Naive thymus-derived CD8-positive, alpha-beta T cell (primary cell): ENCODE measurements at regions of chr17 and their contacts with region 1.

Region 1: DNA sequence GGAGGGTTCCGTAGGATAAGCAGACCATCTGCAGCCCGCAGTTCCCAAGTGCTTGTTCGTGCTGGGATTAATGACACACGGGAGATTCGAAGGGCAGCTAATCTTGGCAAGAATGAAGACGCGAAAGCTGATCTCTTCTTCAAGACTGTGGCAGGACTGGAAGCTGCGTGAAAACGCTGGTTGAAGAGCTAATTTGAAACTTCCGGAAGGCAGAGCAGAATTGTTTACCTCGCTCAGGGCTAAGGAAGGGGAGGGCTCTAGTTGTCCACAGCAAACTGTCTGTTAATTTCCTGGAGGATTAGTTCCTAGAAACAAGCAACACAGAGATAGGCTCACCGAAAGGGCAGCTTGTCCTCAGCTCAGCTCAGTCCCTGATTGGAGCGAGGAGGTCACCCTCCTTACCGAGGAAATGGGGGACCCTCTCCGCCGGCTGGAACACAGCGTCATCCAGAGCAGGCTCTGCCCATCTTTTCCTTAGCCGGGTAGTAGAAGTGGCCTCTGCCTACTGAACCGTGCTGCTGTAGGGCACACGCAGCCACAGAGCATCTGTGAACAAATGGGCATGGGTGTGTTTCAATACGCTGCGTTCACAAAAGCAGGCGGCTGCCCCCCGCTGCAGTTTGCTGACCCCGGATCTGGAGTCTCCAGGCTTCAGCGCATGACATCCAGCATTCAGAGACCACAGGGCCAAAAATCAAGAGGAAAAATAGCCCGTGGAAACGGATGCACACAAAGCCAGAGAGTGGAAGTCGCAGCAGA is 16.7 kb upstream of the BAIAP2 start:
- DNase-seq: peak in 5 of 10 donors; percentile 37 to 64 (median 51)
- ATAC-seq: peak; percentile 86 to 90
- H3K4me3 Mint-ChIP-seq: peak overlapping the region; percentile 82 to 95 (median 88)
- H3K27ac Mint-ChIP-seq: peak overlapping the region; percentile 95 to 99 (median 97)
- H3K4me1 Mint-ChIP-seq: peaks cover 16 to 41% (median 33%) of the 10 kb centered on the region in 4 donors
- H3K27me3 Mint-ChIP-seq: no peaks in the 10 kb centered on the region

Region 2: GRCh38 chr17:80991645-80992076 is 26.6 kb before region 1 on chr17 and contains the start of gene CHMP6:
- POLR2A ChIA-PET with region 1: interaction called, 29 read pairs
- DNase-seq: peak; percentile 44 to 87 (median 72)
- ATAC-seq: peak; percentile 67 to 73
- H3K4me3 Mint-ChIP-seq: peak within 1 kb of the TSS; percentile 78 to 89 (median 80)
- H3K27ac Mint-ChIP-seq: peak within 1 kb of the TSS; percentile 79 to 90 (median 86)
- H3K4me1 Mint-ChIP-seq: peaks cover 12 to 45% (median 29%) of the 10 kb centered on the region in 4 donors
- H3K27me3 Mint-ChIP-seq: no peaks in the 10 kb centered on the region
- polyA plus RNA-seq, gene CHMP6: 41.3 to 43.2 (median 41.6) TPM

Region 3: GRCh38 chr17:81003711-81004475 is 14.3 kb before region 1 on chr17:
- POLR2A ChIA-PET with region 1: interaction called, 11 read pairs
- DNase-seq: peak in 2 of 10 donors; percentile 18 to 21
- ATAC-seq: peak in 1 of 2 donors; percentile 43
- H3K4me3 Mint-ChIP-seq: peak overlapping the region; percentile 34 to 88 (median 65)
- H3K27ac Mint-ChIP-seq: peak overlapping the region in 4 of 10 donors; percentile 16 to 86 (median 56)
- H3K4me1 Mint-ChIP-seq: peaks cover 5 to 27% (median 19%) of the 10 kb centered on the region in 4 donors
- H3K27me3 Mint-ChIP-seq: peaks cover 4 to 15% (median 9%) of the 10 kb centered on the region in 5 donors